ENCODE measurements at regions of chr14 and their contacts with region 1.

Region 1: DNA sequence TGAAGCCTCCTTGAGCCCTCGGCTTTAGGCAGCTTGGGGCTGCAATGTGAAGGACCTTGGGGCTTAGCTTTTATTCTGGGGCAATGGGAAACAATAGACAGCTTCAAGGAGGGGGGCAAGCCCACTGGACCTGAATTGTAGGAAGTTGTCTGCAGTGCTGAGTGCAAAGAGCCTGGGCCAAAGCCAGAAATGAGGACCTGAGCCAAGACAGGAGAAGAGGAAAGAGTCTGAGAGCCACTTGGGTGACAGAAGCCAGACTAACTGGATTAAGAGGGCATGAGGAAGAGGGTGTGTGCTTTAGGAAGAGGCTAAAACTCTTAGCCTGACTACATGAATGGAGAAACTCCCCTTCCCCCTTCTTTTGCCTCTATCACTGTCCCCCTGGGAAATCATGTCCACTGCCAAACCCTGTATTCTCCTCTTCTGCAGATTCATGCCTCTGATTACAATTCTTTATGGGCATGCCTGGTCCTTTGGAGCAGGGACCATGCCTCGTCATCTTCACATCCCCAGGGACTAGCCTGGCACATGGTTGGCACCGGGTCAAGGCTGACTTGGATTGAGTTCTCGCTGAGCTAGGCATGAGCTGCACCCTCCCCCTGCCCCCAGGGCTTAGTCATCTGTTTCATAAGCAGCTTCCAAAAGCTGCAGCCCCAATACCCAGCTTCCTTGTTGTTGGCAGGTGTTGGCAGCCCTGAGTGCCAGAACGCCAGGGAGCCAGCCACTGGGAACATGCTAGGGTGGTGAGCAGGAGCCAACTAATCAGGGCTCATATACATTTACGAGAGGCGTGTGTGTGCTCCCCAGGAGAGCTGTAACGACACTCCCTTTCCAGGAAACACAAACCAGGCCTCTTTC is 27.8 kb upstream of the JDP2 start:
- DNase-seq: peak; percentile 100
- H3K4me3 ChIP-seq: peak overlapping the region; percentile 17; the same call in 1 of the 2 replicates
- H3K27ac ChIP-seq: peak overlapping the region; percentile 70
- H3K4me1 ChIP-seq: peaks cover 31% of the 10 kb centered on the region
- H3K27me3 ChIP-seq: no peaks in the 10 kb centered on the region
- CTCF ChIP-seq: no peak

Region 2: GRCh38 chr14:75101491-75101890 is 298.6 kb before region 1 on chr14:
- CTCF ChIA-PET with region 1: no interaction called
- POLR2A ChIA-PET with region 1: no interaction called
- intact Hi-C with region 1: no loop called
- DNase-seq: no peak
- H3K4me3 ChIP-seq: no peak overlapping the region
- H3K27ac ChIP-seq: no peak overlapping the region
- H3K4me1 ChIP-seq: no peaks in the 10 kb centered on the region
- H3K27me3 ChIP-seq: no peaks in the 10 kb centered on the region
- CTCF ChIP-seq: no peak

Region 3: GRCh38 chr14:75487155-75487671 is 87.2 kb after region 1 on chr14:
- CTCF ChIA-PET with region 1: no interaction called
- POLR2A ChIA-PET with region 1: no interaction called
- intact Hi-C with region 1: loop called (anchors 1 kb)
- DNase-seq: peak; percentile 83 to 99
- H3K4me3 ChIP-seq: no peak overlapping the region
- H3K27ac ChIP-seq: 0 out of 2 replicates have a peak overlapping the region, but pooled peaks have one; percentile 5
- H3K4me1 ChIP-seq: peaks cover 18% of the 10 kb centered on the region
- H3K27me3 ChIP-seq: no peaks in the 10 kb centered on the region
- CTCF ChIP-seq: no peak

Region 4: DNA sequence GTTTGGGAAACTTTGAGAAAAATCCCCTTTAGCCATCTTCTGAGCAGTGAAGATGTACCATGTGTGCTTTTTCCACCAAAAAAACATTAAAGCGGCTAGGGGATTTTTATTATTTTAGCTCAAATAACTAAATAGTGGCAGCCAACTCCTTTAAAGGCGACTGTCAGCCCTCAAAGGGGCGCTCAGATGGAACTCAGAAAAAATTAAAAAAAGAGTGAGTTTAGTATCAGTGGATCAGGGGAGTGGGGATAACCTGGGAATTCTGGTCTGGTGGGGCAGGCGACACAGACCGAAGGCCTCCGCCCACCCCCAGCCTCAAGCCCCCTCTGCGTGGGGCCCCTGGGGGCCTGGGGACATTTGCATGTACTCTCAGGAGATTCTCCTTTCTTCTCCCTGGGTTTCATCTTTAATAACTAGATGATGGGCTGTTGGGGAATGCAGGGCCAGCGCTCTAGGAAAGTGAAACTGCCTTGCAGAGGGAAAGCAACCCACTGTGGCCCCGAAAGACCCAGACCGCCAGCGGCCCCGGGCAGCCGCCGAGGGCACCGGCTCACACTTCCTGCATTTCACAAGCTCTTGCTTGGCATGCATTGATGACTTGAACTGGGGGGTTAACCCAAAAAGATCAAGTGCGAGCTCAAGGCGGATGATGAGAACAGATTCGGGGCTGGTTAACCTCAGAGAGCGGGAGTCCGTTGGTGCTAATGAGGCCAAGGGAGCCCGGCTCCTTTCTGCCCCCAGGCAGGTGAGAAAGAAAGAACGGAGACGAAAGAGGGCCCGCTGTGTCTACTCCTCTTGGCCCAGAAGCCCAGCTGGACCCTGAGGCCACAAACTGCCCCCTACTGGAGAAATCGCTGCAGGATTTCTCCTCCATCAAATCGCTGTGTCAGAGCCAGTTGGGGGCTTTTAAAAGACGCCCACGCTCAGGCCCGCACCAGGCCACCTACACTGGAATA is 114.9 kb after region 1 on chr14:
- CTCF ChIA-PET with region 1: no interaction called
- POLR2A ChIA-PET with region 1: interaction called, 14 read pairs
- intact Hi-C with region 1: no loop called
- DNase-seq: peak in 1 of 2 experiments; percentile 59
- H3K4me3 ChIP-seq: no peak overlapping the region
- H3K27ac ChIP-seq: no peak overlapping the region
- H3K4me1 ChIP-seq: peaks cover 14% of the 10 kb centered on the region
- H3K27me3 ChIP-seq: no peaks in the 10 kb centered on the region
- CTCF ChIP-seq: no peak; the same call in 1 of the 2 replicates

Measured in PC-9 (cell line).